Activated naive CD4-positive, alpha-beta T cell treated with anti-CD3 and anti-CD28 coated beads, Interleukin-2, amount 10 ng/mL, durations not matched to agents 7 days and 5 days (primary cell): ENCODE measurements at regions of chr3 and their contacts with region 1.

Region 1: DNA sequence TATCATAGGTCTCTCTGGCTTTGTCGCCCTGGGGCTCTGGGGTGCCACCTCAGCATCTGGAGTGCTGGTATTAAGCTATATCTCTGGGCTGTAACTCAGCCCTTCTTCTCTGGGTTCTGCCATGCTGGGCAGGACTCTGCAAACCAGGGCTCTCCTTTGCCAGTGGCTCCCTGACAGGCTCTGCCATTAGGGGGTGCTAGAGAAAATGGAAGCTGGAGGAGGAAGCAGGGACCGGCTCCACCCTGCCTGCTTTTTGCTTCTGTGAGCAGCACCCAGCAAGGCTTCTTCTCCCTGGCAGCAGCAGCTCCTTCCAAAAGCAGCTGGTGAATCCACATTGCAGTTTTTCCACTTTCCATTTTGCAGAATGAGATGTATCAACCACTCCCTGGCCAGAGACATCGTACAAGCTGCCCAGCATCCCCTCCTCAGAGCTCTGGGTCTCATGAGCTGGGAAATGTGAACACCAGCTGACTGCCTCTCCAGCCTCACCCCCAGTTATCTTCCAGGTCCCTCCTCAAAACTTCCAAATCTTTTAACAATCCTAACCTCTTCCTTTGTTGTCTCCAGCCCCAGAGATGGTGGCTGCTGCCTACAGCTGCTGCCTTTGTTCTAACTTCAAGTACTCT is 165.0 kb downstream of the ABHD5 start:
- DNase-seq: peak; percentile 70
- H3K4me3 Mint-ChIP-seq: no peak overlapping the region
- H3K27ac Mint-ChIP-seq: no peak overlapping the region
- H3K4me1 Mint-ChIP-seq: no peaks in the 10 kb centered on the region
- H3K27me3 Mint-ChIP-seq: peaks cover 73% of the 10 kb centered on the region

Region 2: GRCh38 chr3:43867436-43868072 is 11.8 kb after region 1 on chr3:
- CTCF ChIA-PET with region 1: interaction called, 11 read pairs
- DNase-seq: no peak
- H3K4me3 Mint-ChIP-seq: no peak overlapping the region
- H3K27ac Mint-ChIP-seq: no peak overlapping the region
- H3K4me1 Mint-ChIP-seq: no peaks in the 10 kb centered on the region
- H3K27me3 Mint-ChIP-seq: peaks cover 52% of the 10 kb centered on the region

Region 3: DNA sequence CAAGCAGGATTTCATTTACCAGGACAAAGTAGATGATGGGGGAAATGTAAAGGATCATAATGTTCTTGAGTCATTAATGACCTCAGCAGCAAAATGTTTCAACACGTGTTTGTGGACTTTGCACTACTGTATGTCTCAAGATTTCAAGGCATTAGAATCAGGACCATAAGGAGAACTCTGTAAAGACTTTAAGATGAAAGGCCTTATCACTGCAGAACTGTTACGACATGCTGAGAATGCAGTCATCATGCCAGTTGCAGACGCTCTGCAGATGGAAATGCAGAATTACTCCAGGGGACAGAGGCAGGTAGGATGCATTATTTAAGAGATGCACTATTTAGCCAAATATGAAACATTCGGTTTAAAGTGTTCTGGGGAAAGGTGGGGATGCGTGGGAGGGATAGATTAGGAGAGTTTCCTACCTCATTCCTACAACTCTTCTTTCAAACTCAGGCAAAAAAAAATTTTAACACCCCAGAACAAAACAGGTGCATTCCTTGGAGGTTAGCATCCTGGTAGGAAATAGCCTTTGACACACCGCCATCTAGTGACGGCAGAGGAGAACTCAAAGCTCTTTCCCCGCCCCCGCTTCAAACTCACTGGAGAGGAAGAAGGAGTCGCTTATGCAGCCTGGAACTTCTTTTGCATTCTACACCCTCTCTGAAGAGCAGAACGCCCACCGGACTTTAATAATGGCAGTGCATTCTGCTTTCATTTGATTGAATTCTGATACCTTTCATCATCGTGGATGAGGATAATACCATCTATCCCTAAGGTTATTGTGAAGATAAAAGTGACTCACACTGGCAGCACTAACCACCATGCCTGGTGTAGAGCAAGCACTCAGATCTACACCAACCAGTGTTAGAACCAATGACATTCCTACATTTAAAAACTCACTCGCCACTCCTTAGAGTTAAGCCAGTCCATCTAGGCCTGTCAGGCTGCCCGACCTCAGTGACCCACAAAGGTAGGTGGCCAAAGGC is 342.8 kb after region 1 on chr3:
- CTCF ChIA-PET with region 1: interaction called, 13 read pairs
- DNase-seq: peak; percentile 80
- H3K4me3 Mint-ChIP-seq: no peak overlapping the region
- H3K27ac Mint-ChIP-seq: no peak overlapping the region
- H3K4me1 Mint-ChIP-seq: no peaks in the 10 kb centered on the region
- H3K27me3 Mint-ChIP-seq: peaks cover 15% of the 10 kb centered on the region